ENCODE measurements at regions of chr9 and their contacts with region 1.

Region 1: DNA sequence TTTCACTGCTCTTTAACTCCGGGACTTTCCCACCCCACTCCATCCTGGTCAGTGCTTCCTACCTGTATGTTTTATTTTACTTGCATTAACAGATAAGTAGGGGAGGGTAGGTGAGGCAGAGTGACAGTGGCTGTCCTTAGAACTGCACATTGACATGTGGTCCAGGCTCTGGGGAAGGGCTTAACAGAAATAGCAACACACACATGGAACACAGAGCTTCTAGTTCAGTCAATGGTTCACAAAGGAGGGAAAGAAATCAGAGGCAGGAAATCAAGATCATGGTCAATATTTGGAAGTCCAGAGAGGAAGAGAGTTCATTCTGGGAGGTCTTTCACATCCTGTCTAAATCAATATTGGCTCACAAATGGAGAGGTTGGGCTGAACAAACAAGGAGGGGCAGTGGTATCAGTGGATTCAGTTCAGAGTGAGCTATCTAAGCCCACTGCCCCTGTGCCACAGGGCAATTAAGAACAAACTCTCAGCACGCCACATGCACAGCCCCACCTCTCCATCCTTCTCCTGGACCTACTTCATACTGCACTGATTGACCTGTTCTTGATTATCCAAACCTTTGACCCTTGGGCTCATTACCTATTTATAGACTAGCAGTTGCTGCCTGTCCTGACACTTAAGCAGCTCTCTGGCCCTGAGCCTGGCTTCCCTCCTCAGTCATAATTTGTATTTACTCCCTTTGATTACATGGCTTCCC is 6.2 kb upstream of the VPS13A start:
- DNase-seq: no peak
- H3K4me3 ChIP-seq: no peak overlapping the region
- H3K27ac ChIP-seq: no peak overlapping the region
- H3K4me1 ChIP-seq: no peaks in the 10 kb centered on the region
- H3K27me3 ChIP-seq: no peaks in the 10 kb centered on the region
- CTCF ChIP-seq: no peak

Region 2: DNA sequence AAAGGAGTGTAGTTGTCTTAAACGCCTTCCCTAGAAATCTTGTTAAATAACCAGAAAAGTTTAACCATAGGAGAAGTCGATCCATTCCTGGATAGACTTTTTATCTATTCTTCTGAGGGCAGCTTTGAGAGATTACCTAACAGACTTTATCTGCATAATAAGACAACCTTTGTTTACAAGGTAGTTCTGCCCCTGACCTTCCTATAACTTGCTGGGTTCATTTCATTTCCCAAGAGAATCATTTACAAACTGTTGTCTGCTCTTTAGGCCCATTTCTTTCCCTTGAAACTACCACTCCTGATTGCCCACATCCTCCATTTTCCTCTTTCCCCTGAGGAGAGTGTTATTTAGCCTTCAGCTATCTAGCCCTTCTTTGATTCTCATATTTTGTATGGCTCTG is 59.7 kb before region 1 on chr9:
- CTCF ChIA-PET with region 1: no interaction called
- POLR2A ChIA-PET with region 1: no interaction called
- intact Hi-C with region 1: no loop called
- DNase-seq: no peak
- H3K4me3 ChIP-seq: no peak overlapping the region
- H3K27ac ChIP-seq: no peak overlapping the region
- H3K4me1 ChIP-seq: no peaks in the 10 kb centered on the region
- H3K27me3 ChIP-seq: 0 out of 2 replicates have a peak, but pooled peaks cover 3% of the 10 kb centered on the region
- CTCF ChIP-seq: no peak

Region 3: DNA sequence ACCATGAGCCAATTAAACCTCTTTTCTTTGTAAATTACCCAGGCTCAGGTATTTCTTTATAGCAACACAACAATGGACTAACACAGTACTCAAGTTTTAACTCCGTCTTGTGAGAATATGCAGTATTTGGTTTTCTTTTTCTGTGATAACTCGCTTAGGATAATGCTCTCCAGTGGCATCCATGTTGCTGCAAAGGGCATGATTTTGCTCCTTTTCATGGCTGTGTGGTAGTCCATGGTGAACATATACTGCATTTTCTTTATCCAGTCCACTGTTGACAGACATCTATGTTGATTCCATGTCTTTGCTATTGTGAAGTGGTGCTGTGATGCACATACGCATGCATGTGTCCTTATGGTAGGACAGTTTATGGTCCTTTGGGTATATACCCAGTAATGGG is 17.1 kb after region 1 on chr9:
- CTCF ChIA-PET with region 1: interaction called, 10 read pairs
- POLR2A ChIA-PET with region 1: no interaction called
- intact Hi-C with region 1: no loop called
- DNase-seq: no peak
- H3K4me3 ChIP-seq: no peak overlapping the region
- H3K27ac ChIP-seq: no peak overlapping the region
- H3K4me1 ChIP-seq: no peaks in the 10 kb centered on the region
- H3K27me3 ChIP-seq: no peaks in the 10 kb centered on the region
- CTCF ChIP-seq: no peak

Region 4: GRCh38 chr9:77616191-77616590 is 445.0 kb after region 1 on chr9:
- CTCF ChIA-PET with region 1: no interaction called
- POLR2A ChIA-PET with region 1: no interaction called
- intact Hi-C with region 1: no loop called
- DNase-seq: no peak
- H3K4me3 ChIP-seq: no peak overlapping the region
- H3K27ac ChIP-seq: no peak overlapping the region
- H3K4me1 ChIP-seq: peaks cover 8% of the 10 kb centered on the region; the same call in 1 of the 2 replicates
- H3K27me3 ChIP-seq: no peaks in the 10 kb centered on the region
- CTCF ChIP-seq: no peak

Measured in PC-9 (cell line).